ENCODE measurements at regions of chr5 and their contacts with region 1.

Region 1: DNA sequence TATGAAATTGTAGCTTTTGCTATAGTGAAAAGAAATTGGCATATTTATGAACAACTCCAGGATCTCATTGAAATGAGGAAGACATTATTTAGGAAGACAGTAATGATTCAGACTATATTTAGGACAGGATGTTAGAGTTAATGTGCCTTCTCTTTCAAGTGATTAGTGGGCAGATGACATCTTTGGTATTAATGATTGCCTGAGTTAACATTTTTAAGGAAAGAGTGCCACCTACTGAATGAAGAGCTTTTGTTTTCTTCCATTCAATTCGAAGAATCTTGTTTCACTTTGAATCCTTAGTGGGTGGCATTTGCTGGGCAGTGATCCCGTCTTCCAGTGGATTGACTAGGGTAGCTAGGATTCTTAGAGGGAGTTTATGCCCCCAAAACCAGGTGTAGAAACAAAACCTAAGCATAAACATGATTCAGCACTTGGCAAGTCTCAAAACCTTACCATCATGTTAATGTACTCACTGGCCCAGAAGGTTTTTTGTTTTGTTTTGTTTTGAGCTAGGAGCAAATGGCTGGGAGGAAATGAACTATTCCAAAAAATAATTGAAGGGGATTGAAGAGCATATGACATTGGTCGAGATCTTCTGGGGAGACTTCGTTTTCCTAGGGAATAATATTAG is 23.2 kb downstream of the MAP3K1 start:
- DNase-seq: no peak
- H3K4me3 Mint-ChIP-seq: peak overlapping the region; percentile 55
- H3K27ac Mint-ChIP-seq: peak overlapping the region; percentile 80
- H3K4me1 Mint-ChIP-seq: peaks cover 85% of the 10 kb centered on the region
- H3K27me3 Mint-ChIP-seq: no peaks in the 10 kb centered on the region

Region 2: GRCh38 chr5:55936100-55936693 is 902.3 kb before region 1 on chr5:
- CTCF ChIA-PET with region 1: interaction called, 6 read pairs
- POLR2A ChIA-PET with region 1: no interaction called
- intact Hi-C with region 1: loop called (anchors 5 kb)
- DNase-seq: peak; percentile 88
- H3K4me3 Mint-ChIP-seq: no peak overlapping the region
- H3K27ac Mint-ChIP-seq: peak overlapping the region; percentile 21
- H3K4me1 Mint-ChIP-seq: peaks cover 9% of the 10 kb centered on the region
- H3K27me3 Mint-ChIP-seq: no peaks in the 10 kb centered on the region

Region 3: DNA sequence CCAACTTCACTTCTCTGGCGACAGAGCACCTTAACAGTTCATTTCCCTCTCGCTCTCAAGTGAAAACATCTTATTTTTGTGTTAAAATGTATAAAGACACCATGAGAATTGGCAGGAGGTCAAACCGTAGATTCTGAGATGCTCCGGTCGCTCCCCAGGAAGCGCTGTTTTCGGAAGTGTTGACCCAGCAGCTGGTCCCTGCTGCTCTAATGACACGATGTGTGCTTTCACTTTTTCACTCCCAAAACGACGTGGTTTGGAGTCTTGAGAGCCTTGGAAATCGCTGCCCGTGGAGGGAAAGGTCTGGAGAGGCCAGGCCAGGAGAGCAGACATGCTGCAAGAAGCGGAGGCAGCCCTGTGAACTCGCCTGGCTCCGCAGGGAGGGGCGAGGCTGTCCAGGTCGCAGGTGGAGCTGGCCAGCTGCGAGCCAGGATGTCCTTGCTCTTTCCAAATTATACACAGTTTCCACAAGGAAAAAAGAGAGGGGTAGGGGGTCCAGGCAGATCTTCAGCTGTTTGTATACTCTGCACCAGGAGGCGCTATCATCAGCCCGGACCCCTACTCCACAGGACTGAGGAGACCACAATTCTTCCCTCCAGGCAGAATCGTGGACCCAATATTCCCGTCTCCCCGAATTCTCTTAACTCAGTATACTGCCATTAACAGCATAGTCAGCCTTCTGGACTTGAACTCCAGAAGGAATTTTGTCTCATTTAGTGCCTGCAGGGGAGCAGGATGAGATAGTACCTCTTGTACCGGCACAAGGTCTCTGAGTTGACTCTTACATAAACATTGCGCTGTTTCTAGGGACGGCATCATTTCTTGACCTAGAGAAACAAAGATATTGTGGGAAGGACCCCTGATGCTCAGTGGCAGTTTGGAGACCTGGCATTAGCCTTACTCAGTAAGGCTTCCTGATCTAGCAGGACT is 356.8 kb before region 1 on chr5:
- CTCF ChIA-PET with region 1: interaction called, 19 read pairs
- POLR2A ChIA-PET with region 1: no interaction called
- intact Hi-C with region 1: loop called (anchors 5 kb)
- DNase-seq: peak; percentile 32
- H3K4me3 Mint-ChIP-seq: peak overlapping the region; percentile 75
- H3K27ac Mint-ChIP-seq: peak overlapping the region; percentile 75
- H3K4me1 Mint-ChIP-seq: peaks cover 41% of the 10 kb centered on the region
- H3K27me3 Mint-ChIP-seq: no peaks in the 10 kb centered on the region

Region 4: DNA sequence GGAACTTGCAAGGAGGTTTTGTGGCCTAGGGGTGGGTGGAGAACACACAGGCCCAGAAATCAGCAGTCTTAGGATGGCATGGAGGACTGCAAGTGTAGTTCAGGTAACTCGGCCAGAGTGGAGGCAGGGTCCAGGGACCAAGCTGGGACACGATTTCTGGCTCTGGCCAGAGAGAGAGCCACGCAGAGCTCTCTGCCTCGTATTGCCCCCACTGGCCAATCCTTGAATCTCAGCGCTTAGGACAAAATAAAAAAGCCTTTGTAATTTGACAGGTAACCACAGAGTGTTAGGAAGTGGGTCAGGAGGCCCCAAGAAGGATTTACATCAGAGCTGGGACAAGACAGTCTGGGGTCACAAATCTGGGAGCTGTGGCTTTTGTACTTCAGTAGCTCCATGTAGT is 11.5 kb before region 1 on chr5:
- CTCF ChIA-PET with region 1: interaction called, 46 read pairs
- POLR2A ChIA-PET with region 1: interaction called, 5 read pairs
- intact Hi-C with region 1: no loop called
- DNase-seq: peak; percentile 25
- H3K4me3 Mint-ChIP-seq: peak overlapping the region; percentile 2
- H3K27ac Mint-ChIP-seq: peak overlapping the region; percentile 80
- H3K4me1 Mint-ChIP-seq: peaks cover 90% of the 10 kb centered on the region
- H3K27me3 Mint-ChIP-seq: no peaks in the 10 kb centered on the region

Region 5: GRCh38 chr5:56856541-56857178 is 18.1 kb after region 1 on chr5:
- CTCF ChIA-PET with region 1: interaction called, 10 read pairs
- POLR2A ChIA-PET with region 1: interaction called, 4 read pairs
- intact Hi-C with region 1: no loop called
- DNase-seq: no peak
- H3K4me3 Mint-ChIP-seq: no peak overlapping the region
- H3K27ac Mint-ChIP-seq: peak overlapping the region; percentile 16
- H3K4me1 Mint-ChIP-seq: peaks cover 47% of the 10 kb centered on the region
- H3K27me3 Mint-ChIP-seq: no peaks in the 10 kb centered on the region

Measured in activated CD4-positive, alpha-beta memory T cell treated with anti-CD3 and anti-CD28 coated beads for 36 hours (primary cell).